ENCODE measurements at regions of chr6 and their contacts with region 1.

Region 1: GRCh38 chr6:106979427-106979884 is 4.9 kb upstream of the CD24 start:
- DNase-seq: peak; percentile 85
- H3K4me3 Mint-ChIP-seq: no peak overlapping the region
- H3K27ac Mint-ChIP-seq: no peak overlapping the region
- H3K4me1 Mint-ChIP-seq: peaks cover 5% of the 10 kb centered on the region
- H3K27me3 Mint-ChIP-seq: no peaks in the 10 kb centered on the region
- CTCF ChIP-seq: peak; percentile 90

Region 2: DNA sequence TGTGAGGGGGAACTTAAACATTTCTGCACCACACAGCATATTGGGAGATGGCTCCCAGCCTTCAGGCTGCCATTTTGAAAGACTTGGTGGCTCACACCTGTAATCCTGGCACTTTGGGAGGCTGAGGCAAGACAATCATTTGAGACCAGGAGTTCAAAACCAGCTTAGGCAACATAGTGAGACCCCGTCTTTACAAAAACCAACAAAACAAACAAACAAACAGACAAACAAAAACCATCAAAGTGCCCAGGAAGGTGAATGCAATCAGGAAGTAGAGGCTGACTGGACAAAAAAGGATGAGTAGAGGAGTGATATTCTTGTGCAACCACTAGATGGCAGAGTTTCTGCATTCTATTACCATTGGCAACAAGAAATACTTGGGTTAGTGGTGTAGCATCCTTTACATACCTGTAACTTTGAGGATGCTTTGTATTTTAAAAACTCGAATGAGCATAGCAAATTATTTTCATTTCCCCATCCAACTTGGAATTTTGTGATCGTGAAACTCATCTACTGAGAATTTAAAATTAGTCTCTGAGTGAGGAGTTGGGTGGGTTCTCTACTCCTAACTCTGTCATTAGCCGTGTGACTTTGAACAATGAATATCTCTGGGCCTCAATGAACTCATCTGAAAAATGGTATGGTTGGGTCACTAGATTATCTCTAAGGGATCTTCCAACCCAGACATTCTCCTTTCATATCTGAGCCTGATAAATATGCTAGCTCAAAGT is 534.5 kb before region 1 on chr6:
- CTCF ChIA-PET with region 1: interaction called, 46 read pairs
- POLR2A ChIA-PET with region 1: interaction called, 6 read pairs
- intact Hi-C with region 1: loop called (anchors 1 kb)
- DNase-seq: peak; percentile 79
- H3K4me3 Mint-ChIP-seq: no peak overlapping the region
- H3K27ac Mint-ChIP-seq: no peak overlapping the region
- H3K4me1 Mint-ChIP-seq: peaks cover 6% of the 10 kb centered on the region
- H3K27me3 Mint-ChIP-seq: no peaks in the 10 kb centered on the region
- CTCF ChIP-seq: peak; percentile 65

Region 3: GRCh38 chr6:106579281-106579680 is 400.2 kb before region 1 on chr6:
- CTCF ChIA-PET with region 1: interaction called, 10 read pairs
- POLR2A ChIA-PET with region 1: no interaction called
- intact Hi-C with region 1: no loop called
- DNase-seq: no peak
- H3K4me3 Mint-ChIP-seq: no peak overlapping the region
- H3K27ac Mint-ChIP-seq: no peak overlapping the region
- H3K4me1 Mint-ChIP-seq: peaks cover 7% of the 10 kb centered on the region
- H3K27me3 Mint-ChIP-seq: no peaks in the 10 kb centered on the region
- CTCF ChIP-seq: no peak

Region 4: GRCh38 chr6:106702451-106703110 is 276.9 kb before region 1 on chr6:
- CTCF ChIA-PET with region 1: no interaction called
- POLR2A ChIA-PET with region 1: no interaction called
- intact Hi-C with region 1: loop called (anchors 1 kb)
- DNase-seq: no peak
- H3K4me3 Mint-ChIP-seq: no peak overlapping the region
- H3K27ac Mint-ChIP-seq: no peak overlapping the region
- H3K4me1 Mint-ChIP-seq: no peaks in the 10 kb centered on the region
- H3K27me3 Mint-ChIP-seq: no peaks in the 10 kb centered on the region
- CTCF ChIP-seq: no peak